PC-9 (cell line): ENCODE measurements at regions of chr18 and their contacts with region 1.

Region 1: DNA sequence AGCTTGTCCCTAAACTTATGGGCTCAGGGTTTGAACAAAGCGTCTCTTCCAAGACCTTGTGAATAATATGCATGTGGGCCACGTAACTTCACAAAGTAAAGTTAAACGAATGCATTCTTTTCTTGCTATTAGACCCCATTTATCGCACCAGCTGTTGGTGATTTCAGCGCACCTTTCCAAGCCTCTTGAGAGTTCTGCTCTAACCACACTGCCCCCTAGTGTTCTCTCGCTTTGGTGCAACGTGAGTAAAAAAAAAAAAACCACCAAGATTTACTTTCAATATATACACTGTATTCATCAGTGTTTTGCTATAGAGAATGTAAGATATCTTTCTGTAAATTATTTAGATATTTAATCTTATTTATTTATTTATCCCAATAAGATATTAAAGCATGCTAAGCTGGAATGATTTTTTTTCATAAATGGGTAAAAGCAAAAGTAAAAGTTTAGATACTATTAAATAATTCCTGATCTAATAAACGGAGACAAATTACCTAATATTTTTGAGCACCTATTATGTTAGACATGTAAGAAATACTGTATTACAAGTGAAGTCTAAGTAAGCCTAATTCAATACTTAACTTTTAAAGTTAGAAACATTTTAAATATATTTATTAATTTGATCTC is 459.5 kb downstream of the DLGAP1 start:
- DNase-seq: peak in 1 of 2 experiments; percentile 45
- H3K4me3 ChIP-seq: no peak overlapping the region
- H3K27ac ChIP-seq: no peak overlapping the region
- H3K4me1 ChIP-seq: no peaks in the 10 kb centered on the region
- H3K27me3 ChIP-seq: no peaks in the 10 kb centered on the region
- CTCF ChIP-seq: peak; percentile 89

Region 2: GRCh38 chr18:2932247-2933181 is 1063.1 kb before region 1 on chr18:
- CTCF ChIA-PET with region 1: no interaction called
- POLR2A ChIA-PET with region 1: no interaction called
- intact Hi-C with region 1: loop called (anchors 1 kb)
- DNase-seq: peak; percentile 32 to 52
- H3K4me3 ChIP-seq: no peak overlapping the region
- H3K27ac ChIP-seq: no peak overlapping the region
- H3K4me1 ChIP-seq: no peaks in the 10 kb centered on the region
- H3K27me3 ChIP-seq: no peaks in the 10 kb centered on the region
- CTCF ChIP-seq: peak; percentile 89

Region 3: GRCh38 chr18:3261371-3262246 is 734.0 kb before region 1 on chr18 and contains the start of gene MYL12B:
- CTCF ChIA-PET with region 1: no interaction called
- POLR2A ChIA-PET with region 1: no interaction called
- intact Hi-C with region 1: loop called (anchors 5 kb)
- DNase-seq: peak; percentile 77 to 89
- H3K4me3 ChIP-seq: peak within 1 kb of the TSS; percentile 100
- H3K27ac ChIP-seq: peak within 1 kb of the TSS; percentile 93
- H3K4me1 ChIP-seq: peaks cover 39% of the 10 kb centered on the region
- H3K27me3 ChIP-seq: no peaks in the 10 kb centered on the region
- CTCF ChIP-seq: no peak
- total RNA-seq, gene MYL12B: 381 and 383 TPM in 2 replicates

Region 4: DNA sequence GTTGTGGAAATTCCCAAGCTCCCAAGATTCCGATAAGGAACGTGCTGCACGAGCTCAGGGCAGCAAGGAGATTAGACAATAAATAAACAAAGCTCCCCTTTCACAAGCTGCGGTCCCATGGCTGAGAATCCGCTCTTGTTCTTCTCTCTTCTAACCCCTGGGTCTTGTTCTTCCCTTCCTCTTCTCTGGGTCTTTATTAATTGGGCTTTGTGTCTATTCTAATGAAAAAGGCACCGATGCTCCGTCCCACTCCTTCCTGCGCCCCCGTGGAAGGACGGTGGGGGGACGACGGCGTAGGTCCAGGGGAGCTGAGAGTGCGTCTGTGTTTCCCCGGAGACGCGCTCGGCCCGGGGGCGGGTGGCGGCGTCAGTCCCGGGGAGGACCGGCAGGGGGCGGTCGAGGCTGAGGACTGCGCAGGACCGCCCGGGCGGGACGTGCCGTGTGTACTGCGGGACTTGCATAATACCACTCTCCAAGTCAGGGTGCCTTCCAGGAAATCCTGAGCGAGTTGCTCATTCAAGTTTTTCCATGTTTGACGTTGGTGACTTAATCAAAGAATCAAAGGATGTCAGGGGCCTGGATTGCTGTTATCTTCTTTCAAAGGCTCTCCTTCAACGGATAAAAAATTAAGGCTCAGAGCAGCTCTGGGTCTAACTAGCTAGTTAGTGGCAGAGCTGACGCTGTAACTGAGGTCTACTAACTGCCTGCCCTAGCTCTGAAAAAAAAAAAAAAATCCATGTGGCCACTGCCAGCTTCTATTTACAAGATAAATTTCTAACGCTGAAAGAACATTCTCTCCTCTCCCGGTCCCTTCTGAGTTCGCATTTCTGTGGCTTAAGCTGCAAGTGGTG is 224.2 kb before region 1 on chr18:
- CTCF ChIA-PET with region 1: interaction called, 8 read pairs
- POLR2A ChIA-PET with region 1: no interaction called
- intact Hi-C with region 1: loop called (anchors 1 kb)
- DNase-seq: peak; percentile 69 to 91
- H3K4me3 ChIP-seq: peak overlapping the region; percentile 51
- H3K27ac ChIP-seq: peak overlapping the region; percentile 13; the same call in 1 of the 2 replicates
- H3K4me1 ChIP-seq: peaks cover 30% of the 10 kb centered on the region
- H3K27me3 ChIP-seq: no peaks in the 10 kb centered on the region
- CTCF ChIP-seq: peak; percentile 92

Region 5: GRCh38 chr18:3869848-3870247 is 125.7 kb before region 1 on chr18:
- CTCF ChIA-PET with region 1: no interaction called
- POLR2A ChIA-PET with region 1: no interaction called
- intact Hi-C with region 1: loop called (anchors 5 kb)
- DNase-seq: no peak
- H3K4me3 ChIP-seq: no peak overlapping the region
- H3K27ac ChIP-seq: no peak overlapping the region
- H3K4me1 ChIP-seq: no peaks in the 10 kb centered on the region
- H3K27me3 ChIP-seq: no peaks in the 10 kb centered on the region
- CTCF ChIP-seq: peak; percentile 78

Region 6: DNA sequence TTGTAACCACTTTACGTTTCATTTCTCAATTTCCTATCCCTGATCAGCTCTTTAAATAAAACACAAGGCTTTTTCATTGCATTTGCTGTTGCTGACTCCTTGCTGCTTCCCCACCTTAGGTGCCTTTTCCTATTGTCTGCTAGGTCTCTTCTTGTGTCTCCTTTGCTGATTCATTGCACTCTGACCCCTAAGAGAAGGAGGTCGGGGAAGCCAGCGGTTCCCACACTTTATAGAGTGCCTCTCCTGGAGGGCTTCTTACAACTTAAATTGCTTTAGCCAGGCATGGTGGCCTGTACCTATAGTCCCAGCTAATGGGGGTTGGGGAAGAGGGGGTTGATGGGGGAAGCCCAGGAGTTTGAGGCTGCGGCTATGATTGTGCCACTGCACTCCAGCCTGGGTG is 35.4 kb before region 1 on chr18:
- CTCF ChIA-PET with region 1: no interaction called
- POLR2A ChIA-PET with region 1: no interaction called
- intact Hi-C with region 1: no loop called
- DNase-seq: no peak
- H3K4me3 ChIP-seq: no peak overlapping the region
- H3K27ac ChIP-seq: no peak overlapping the region
- H3K4me1 ChIP-seq: no peaks in the 10 kb centered on the region
- H3K27me3 ChIP-seq: no peaks in the 10 kb centered on the region
- CTCF ChIP-seq: no peak

Region 7: GRCh38 chr18:5057386-5058348 is 1062.1 kb after region 1 on chr18:
- CTCF ChIA-PET with region 1: no interaction called
- POLR2A ChIA-PET with region 1: no interaction called
- intact Hi-C with region 1: loop called (anchors 5 kb)
- DNase-seq: peak in 1 of 2 experiments; percentile 50
- H3K4me3 ChIP-seq: no peak overlapping the region
- H3K27ac ChIP-seq: no peak overlapping the region
- H3K4me1 ChIP-seq: no peaks in the 10 kb centered on the region
- H3K27me3 ChIP-seq: peaks cover 22% of the 10 kb centered on the region
- CTCF ChIP-seq: peak; percentile 86